ENCODE measurements at regions of chr20 and their contacts with region 1.

Region 1: DNA sequence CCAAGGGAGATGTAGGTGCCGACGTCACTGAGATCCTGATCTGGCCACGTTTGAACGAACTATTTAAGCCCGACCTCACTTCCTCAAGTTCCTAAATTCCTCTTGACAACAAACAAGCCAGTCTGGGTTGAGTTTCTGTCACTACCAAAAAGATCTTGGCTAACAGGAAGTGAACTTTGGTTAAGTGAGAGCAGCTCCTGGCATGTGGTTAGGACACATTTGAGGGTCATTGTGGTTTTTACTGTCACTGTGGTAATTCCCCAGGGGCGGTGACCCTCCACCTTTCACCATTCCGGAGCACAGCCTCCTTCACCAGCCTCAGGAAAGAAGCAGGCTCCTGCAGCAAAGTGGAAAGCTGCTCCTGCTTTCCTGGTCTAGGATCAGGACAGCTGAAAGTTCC is 43.1 kb upstream of the ZNF831 start:
- DNase-seq: peak; percentile 52 to 69 (median 64)
- H3K4me3 ChIP-seq: no peak overlapping the region
- H3K4me3 Mint-ChIP-seq: peak overlapping the region; percentile 32 to 89 (median 71)
- H3K27ac ChIP-seq: peak overlapping the region; percentile 80
- H3K27ac Mint-ChIP-seq: peak overlapping the region; percentile 94 to 100 (median 99)
- H3K4me1 ChIP-seq: peaks cover 86% of the 10 kb centered on the region
- H3K4me1 Mint-ChIP-seq: peaks cover 66 to 94% (median 86%) of the 10 kb centered on the region in 4 donors
- H3K27me3 ChIP-seq: no peaks in the 10 kb centered on the region
- H3K27me3 Mint-ChIP-seq: no peaks in the 10 kb centered on the region

Region 2: DNA sequence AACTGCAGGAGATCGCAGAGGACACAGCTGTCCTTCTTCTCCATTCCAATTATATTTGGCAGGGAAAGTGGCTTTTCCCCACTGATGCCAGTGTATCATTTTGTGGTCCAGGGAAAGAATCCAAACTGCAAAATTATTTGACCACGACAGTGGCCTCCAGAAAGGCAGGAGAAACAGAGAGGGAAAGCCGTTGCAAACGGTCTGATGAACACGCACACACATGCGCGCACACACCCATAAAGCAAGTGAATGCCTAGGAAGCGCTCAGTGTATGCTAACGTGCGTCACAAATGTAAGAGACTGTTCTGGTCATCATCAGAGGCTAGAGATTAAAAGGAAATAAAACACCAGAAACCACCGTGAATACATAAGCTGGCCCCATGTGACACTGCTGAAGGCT is 373.9 kb before region 1 on chr20:
- CTCF ChIA-PET with region 1: no interaction called
- POLR2A ChIA-PET with region 1: no interaction called
- intact Hi-C with region 1: no loop called
- DNase-seq: no peak
- H3K4me3 ChIP-seq: no peak overlapping the region
- H3K4me3 Mint-ChIP-seq: no peak overlapping the region
- H3K27ac ChIP-seq: no peak overlapping the region
- H3K27ac Mint-ChIP-seq: no peak overlapping the region
- H3K4me1 ChIP-seq: no peaks in the 10 kb centered on the region
- H3K4me1 Mint-ChIP-seq: no peaks in the 10 kb centered on the region
- H3K27me3 ChIP-seq: no peaks in the 10 kb centered on the region
- H3K27me3 Mint-ChIP-seq: peaks cover 16 to 33% of the 10 kb centered on the region in 2 donors

Region 3: GRCh38 chr20:58980700-58981627 is 139.5 kb before region 1 on chr20 and contains the start of gene NELFCD:
- CTCF ChIA-PET with region 1: no interaction called
- POLR2A ChIA-PET with region 1: no interaction called
- intact Hi-C with region 1: no loop called
- DNase-seq: peak; percentile 84 to 90 (median 88)
- H3K4me3 ChIP-seq: peak within 1 kb of the TSS; percentile 82 to 95
- H3K4me3 Mint-ChIP-seq: peak within 1 kb of the TSS; percentile 91 to 97 (median 94)
- H3K27ac ChIP-seq: peak within 1 kb of the TSS; percentile 66
- H3K27ac Mint-ChIP-seq: peak within 1 kb of the TSS; percentile 72 to 97 (median 93)
- H3K4me1 ChIP-seq: peaks cover 41% of the 10 kb centered on the region
- H3K4me1 Mint-ChIP-seq: peaks cover 29 to 39% (median 33%) of the 10 kb centered on the region in 4 donors
- H3K27me3 ChIP-seq: no peaks in the 10 kb centered on the region
- H3K27me3 Mint-ChIP-seq: no peaks in the 10 kb centered on the region
- total RNA-seq, gene NELFCD: 77.6 to 93.3 TPM

Region 4: GRCh38 chr20:59102841-59103299 is 17.6 kb before region 1 on chr20:
- CTCF ChIA-PET with region 1: interaction called, 9 read pairs
- POLR2A ChIA-PET with region 1: interaction called, 15 read pairs
- intact Hi-C with region 1: no loop called
- DNase-seq: no peak
- H3K4me3 ChIP-seq: no peak overlapping the region
- H3K4me3 Mint-ChIP-seq: peak overlapping the region in 1 of 8 donors; percentile 25
- H3K27ac ChIP-seq: no peak overlapping the region
- H3K27ac Mint-ChIP-seq: peak overlapping the region in 5 of 7 donors; percentile 1 to 29 (median 25)
- H3K4me1 ChIP-seq: peaks cover 12% of the 10 kb centered on the region
- H3K4me1 Mint-ChIP-seq: peaks cover 11 to 26% (median 20%) of the 10 kb centered on the region in 4 donors
- H3K27me3 ChIP-seq: no peaks in the 10 kb centered on the region
- H3K27me3 Mint-ChIP-seq: peaks cover 0 to 2% of the 10 kb centered on the region in 2 donors

Region 5: GRCh38 chr20:59149651-59150504 is 29.4 kb after region 1 on chr20:
- CTCF ChIA-PET with region 1: interaction called, 35 read pairs
- POLR2A ChIA-PET with region 1: interaction called, 307 read pairs
- intact Hi-C with region 1: loop called (anchors 1 kb)
- DNase-seq: peak; percentile 88 to 93 (median 91)
- H3K4me3 ChIP-seq: peak overlapping the region in 1 of 2 donors; percentile 2
- H3K4me3 Mint-ChIP-seq: peak overlapping the region; percentile 73 to 91 (median 80)
- H3K27ac ChIP-seq: peak overlapping the region; percentile 93
- H3K27ac Mint-ChIP-seq: peak overlapping the region; percentile 96 to 100 (median 100)
- H3K4me1 ChIP-seq: peaks cover 92% of the 10 kb centered on the region
- H3K4me1 Mint-ChIP-seq: peaks cover 72 to 97% (median 88%) of the 10 kb centered on the region in 4 donors
- H3K27me3 ChIP-seq: no peaks in the 10 kb centered on the region
- H3K27me3 Mint-ChIP-seq: no peaks in the 10 kb centered on the region

Region 6: DNA sequence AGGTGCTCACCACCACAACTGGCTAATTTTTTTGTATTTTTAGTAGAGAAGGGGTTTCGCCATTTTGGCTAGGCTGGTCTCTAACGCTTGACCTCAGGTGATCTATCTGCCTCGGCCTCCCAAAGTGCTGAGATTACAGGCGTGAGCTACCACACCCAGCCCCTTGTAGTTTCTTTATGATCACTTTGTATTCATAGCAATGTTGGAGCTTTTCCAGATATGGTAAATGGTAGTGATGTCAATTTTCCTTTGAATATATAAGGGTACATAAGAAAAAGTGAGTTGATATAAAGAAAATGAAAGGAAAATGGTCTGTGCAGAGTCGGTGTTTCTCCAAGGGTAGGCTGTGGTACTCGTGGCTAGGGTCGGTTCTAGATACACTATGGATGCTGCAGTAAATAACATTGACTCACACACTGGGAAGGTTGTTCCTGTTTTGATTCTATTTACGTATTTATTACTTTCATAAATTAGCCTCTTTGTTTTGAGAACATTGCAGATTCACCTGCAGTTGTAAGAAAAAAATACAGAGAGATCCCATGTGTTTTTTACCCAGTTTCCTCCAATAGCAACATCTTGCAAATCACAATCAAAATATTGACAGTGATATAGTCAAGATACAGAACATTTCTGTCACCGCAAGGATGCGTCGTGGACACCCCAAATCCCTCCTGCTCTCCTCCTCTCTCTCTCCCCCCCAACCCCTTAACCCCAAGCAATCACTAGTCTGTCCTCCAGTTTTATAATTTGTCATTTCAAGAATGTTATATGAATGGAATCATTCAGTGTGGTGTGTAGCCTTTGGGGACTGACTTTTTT is 45.6 kb after region 1 on chr20:
- CTCF ChIA-PET with region 1: interaction called, 37 read pairs
- POLR2A ChIA-PET with region 1: interaction called, 161 read pairs
- intact Hi-C with region 1: loop called (anchors 1 kb)
- DNase-seq: peak; percentile 70 to 83 (median 80)
- H3K4me3 ChIP-seq: peak overlapping the region; percentile 61 to 64
- H3K4me3 Mint-ChIP-seq: peak overlapping the region; percentile 84 to 96 (median 88)
- H3K27ac ChIP-seq: peak overlapping the region; percentile 97
- H3K27ac Mint-ChIP-seq: peak overlapping the region; percentile 97 to 99 (median 99)
- H3K4me1 ChIP-seq: peaks cover 88% of the 10 kb centered on the region
- H3K4me1 Mint-ChIP-seq: peaks cover 72 to 98% (median 82%) of the 10 kb centered on the region in 4 donors
- H3K27me3 ChIP-seq: no peaks in the 10 kb centered on the region
- H3K27me3 Mint-ChIP-seq: no peaks in the 10 kb centered on the region

Region 7: GRCh38 chr20:59190466-59190865 is 70.0 kb after region 1 on chr20:
- CTCF ChIA-PET with region 1: no interaction called
- POLR2A ChIA-PET with region 1: interaction called, 13 read pairs
- intact Hi-C with region 1: no loop called
- DNase-seq: no peak
- H3K4me3 ChIP-seq: no peak overlapping the region
- H3K4me3 Mint-ChIP-seq: no peak overlapping the region
- H3K27ac ChIP-seq: no peak overlapping the region
- H3K27ac Mint-ChIP-seq: peak overlapping the region in 3 of 7 donors; percentile 56 to 73 (median 57)
- H3K4me1 ChIP-seq: peaks cover 4% of the 10 kb centered on the region
- H3K4me1 Mint-ChIP-seq: peaks cover 14 to 38% (median 20%) of the 10 kb centered on the region in 4 donors
- H3K27me3 ChIP-seq: no peaks in the 10 kb centered on the region
- H3K27me3 Mint-ChIP-seq: no peaks in the 10 kb centered on the region

Measured in CD4-positive, alpha-beta memory T cell (primary cell).